Astrocyte of the cerebellum (primary cell): ENCODE measurements at regions of chr10 and their contacts with region 1.

Region 1: GRCh38 chr10:68628576-68629127 is 68.5 kb downstream of the TET1 start:
- DNase-seq: peak; percentile 38
- H3K4me3 ChIP-seq: no peak overlapping the region
- CTCF ChIP-seq: no peak

Region 2: GRCh38 chr10:68566955-68567354 is 61.7 kb before region 1 on chr10:
- in situ Hi-C with region 1: loop called (anchors 5 kb)
- DNase-seq: no peak
- H3K4me3 ChIP-seq: no peak overlapping the region
- CTCF ChIP-seq: no peak